ENCODE measurements at regions of chr5 and their contacts with region 1.

Region 1: DNA sequence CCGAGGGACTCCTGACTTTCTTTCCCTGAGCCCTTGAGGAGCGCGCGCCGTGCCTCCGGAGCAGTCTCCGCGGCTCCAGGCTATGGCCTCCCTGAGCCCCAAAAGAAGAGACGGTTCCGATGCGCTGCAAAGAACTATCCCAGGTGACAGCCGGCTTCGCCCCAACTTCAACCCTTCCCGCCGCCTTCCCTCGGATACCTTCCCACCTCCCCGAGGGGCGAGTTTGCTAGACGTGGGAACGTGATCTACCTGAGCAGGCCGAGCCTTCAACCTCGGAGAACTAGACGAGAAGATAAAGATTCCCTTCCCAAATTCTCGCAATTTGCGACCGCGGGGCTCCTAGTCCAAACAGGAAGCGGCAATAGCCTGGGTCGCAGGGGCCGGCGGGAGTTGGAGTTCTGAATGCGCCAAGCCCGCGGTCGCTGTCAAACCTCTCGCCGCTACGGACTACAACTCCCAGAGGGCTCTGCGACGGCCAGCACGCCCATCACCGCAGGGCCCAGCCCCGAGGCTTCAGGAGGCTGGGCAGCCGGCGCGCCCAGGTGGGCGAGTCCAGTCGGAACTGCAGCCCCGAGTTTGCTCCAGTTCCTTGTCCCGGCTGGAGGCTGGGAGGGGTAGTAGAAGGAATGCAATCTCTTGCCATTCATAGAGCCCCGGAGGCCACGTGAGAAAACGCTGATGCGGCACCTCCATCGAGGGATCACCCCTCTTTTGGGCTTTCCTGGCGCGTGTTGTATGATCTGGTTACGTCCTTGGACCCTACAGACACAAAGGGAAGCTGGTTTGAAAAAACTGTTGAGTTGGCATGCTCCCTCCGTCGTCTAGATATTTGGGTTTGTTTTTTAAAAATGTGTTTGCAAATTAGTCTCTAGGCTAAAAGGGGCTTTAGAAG is at the start of gene SLC38A9:
- DNase-seq: peak; percentile 97
- total RNA-seq, gene SLC38A9: 6.8 TPM

Region 2: DNA sequence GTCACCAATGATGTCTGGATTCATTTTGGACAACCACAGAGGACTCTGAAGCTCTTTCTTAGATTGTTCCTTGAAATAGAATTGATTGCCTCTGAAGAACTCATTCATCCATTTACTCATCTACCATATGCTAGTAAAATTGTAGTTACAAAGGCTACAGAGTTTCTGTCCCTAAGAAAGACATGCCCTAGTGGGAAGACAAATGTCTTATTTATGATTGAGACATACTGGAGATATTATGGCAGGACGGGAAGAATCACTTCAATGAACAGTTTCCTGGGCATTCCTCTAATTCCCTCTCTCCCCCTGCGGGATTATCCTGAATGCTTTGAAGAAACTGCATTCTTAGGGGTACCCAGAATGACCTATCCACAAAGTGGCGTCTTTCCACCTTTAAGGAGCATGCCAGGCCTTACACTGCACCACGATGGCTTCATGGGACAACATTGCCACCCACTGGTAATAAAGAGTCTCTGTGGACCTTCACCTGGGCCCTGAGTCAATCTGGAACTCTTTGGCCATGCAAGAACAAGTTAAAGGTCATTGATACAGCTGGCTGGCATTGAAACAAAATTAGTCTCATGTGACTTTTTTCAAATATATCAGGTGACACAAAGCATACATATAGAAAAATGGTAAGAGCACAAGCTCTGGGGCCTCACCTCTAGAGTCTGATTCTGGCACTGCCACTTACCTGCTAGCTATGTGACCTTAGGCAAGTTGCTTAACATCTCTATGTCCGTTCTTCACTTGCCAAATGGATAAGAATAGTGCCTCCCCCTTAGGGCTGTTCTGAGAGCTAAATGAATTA is 488.8 kb after region 1 on chr5:
- intact Hi-C with region 1: loop called (anchors 10 kb)
- DNase-seq: no peak